ENCODE measurements at regions of chr19 and their contacts with region 1.

Region 1: GRCh38 chr19:54959840-54960239 is 6.3 kb upstream of the NLRP2 start:
- DNase-seq: peak in 1 of 2 experiments; percentile 22
- H3K4me3 ChIP-seq: no peak overlapping the region
- H3K27ac ChIP-seq: no peak overlapping the region
- H3K4me1 ChIP-seq: no peaks in the 10 kb centered on the region
- H3K27me3 ChIP-seq: no peaks in the 10 kb centered on the region
- CTCF ChIP-seq: no peak

Region 2: DNA sequence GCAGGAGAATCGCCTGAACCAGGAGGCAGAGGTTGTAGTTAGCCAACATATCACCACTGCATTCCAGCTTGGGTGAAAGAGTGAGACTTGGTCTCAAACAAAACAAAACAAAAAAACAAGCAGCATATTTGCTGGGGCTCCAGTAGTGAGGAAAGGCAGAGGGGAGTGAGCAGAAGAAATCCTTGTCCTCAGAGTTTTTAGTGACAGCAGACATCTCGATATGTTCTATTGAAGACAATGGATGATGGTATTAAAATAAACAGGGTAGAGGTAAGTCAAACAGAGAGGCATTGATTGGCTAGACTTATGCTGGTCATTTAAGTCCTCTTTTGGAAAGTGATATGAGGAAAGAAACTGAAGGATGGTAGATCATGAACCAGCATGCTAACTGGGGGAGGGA is 31.5 kb before region 1 on chr19:
- CTCF ChIA-PET with region 1: no interaction called
- POLR2A ChIA-PET with region 1: interaction called, 14 read pairs
- intact Hi-C with region 1: no loop called
- DNase-seq: no peak
- H3K4me3 ChIP-seq: no peak overlapping the region
- H3K27ac ChIP-seq: no peak overlapping the region
- H3K4me1 ChIP-seq: no peaks in the 10 kb centered on the region
- H3K27me3 ChIP-seq: peaks cover 14% of the 10 kb centered on the region; the same call in 1 of the 2 replicates
- CTCF ChIP-seq: no peak

Region 3: GRCh38 chr19:55036058-55036457 is 76.2 kb after region 1 on chr19:
- CTCF ChIA-PET with region 1: interaction called, 10 read pairs
- POLR2A ChIA-PET with region 1: no interaction called
- intact Hi-C with region 1: no loop called
- DNase-seq: no peak
- H3K4me3 ChIP-seq: no peak overlapping the region
- H3K27ac ChIP-seq: no peak overlapping the region
- H3K4me1 ChIP-seq: no peaks in the 10 kb centered on the region
- H3K27me3 ChIP-seq: no peaks in the 10 kb centered on the region
- CTCF ChIP-seq: no peak

Region 4: GRCh38 chr19:55333870-55334269 is 374.0 kb after region 1 on chr19:
- CTCF ChIA-PET with region 1: no interaction called
- POLR2A ChIA-PET with region 1: interaction called, 14 read pairs
- intact Hi-C with region 1: no loop called
- DNase-seq: no peak
- H3K4me3 ChIP-seq: no peak overlapping the region
- H3K27ac ChIP-seq: no peak overlapping the region
- H3K4me1 ChIP-seq: peaks cover 17% of the 10 kb centered on the region
- H3K27me3 ChIP-seq: no peaks in the 10 kb centered on the region
- CTCF ChIP-seq: no peak

Measured in PC-9 (cell line).